Right ventricle myocardium superior (tissue), 1 donor: ENCODE measurements at regions of chr14 and their contacts with region 1.

Region 1: GRCh38 chr14:67666750-67667449 is 7.5 kb downstream of the VTI1B start:
- DNase-seq: no peak
- ATAC-seq: peak; percentile 79

Region 2: GRCh38 chr14:67619446-67620216 is 47.3 kb before region 1 on chr14 and contains the start of gene ARG2:
- intact Hi-C with region 1: loop called (anchors 5 kb)
- DNase-seq: peak; percentile 99
- ATAC-seq: peak; percentile 99
- total RNA-seq, gene ARG2: 0.75 TPM